ENCODE measurements at regions of chr2 and their contacts with region 1.

Region 1: DNA sequence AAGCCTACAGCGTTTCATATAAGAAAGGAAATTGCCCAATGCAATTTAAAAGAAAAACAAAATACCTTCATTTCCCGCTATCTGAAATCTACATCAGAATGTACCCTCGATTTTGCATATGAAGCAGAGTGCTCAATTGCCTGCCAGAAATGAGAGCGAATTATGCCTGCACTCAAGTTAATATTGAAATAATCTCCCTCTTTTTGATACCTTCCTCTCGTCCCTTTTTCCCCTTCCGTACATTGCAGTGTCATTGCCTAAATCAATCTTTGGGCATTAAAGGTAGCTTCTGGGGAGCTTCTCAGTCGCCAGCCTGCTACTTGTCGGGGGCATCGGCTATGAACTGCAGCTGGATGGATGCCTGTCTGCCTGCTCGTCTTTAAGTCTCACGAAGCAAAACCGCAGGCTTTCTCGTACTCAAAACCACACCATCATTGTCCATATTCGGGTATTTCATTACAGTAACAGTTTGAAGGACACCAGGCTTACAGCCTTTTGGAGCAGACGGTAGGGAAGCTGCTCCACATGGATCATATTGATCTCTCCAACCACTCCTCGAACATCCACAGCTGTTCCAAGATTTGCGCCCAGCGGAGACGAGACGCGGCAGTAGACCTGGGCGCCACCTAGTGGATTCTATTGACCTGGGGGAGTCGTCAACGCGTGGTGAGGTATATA is 64.0 kb upstream of the HNRNPA3 start:
- DNase-seq: peak; percentile 65
- H3K4me3 Mint-ChIP-seq: peak overlapping the region; percentile 82
- H3K27ac Mint-ChIP-seq: peak overlapping the region; percentile 10
- H3K4me1 Mint-ChIP-seq: peaks cover 13% of the 10 kb centered on the region
- H3K27me3 Mint-ChIP-seq: peaks cover 61% of the 10 kb centered on the region

Region 2: DNA sequence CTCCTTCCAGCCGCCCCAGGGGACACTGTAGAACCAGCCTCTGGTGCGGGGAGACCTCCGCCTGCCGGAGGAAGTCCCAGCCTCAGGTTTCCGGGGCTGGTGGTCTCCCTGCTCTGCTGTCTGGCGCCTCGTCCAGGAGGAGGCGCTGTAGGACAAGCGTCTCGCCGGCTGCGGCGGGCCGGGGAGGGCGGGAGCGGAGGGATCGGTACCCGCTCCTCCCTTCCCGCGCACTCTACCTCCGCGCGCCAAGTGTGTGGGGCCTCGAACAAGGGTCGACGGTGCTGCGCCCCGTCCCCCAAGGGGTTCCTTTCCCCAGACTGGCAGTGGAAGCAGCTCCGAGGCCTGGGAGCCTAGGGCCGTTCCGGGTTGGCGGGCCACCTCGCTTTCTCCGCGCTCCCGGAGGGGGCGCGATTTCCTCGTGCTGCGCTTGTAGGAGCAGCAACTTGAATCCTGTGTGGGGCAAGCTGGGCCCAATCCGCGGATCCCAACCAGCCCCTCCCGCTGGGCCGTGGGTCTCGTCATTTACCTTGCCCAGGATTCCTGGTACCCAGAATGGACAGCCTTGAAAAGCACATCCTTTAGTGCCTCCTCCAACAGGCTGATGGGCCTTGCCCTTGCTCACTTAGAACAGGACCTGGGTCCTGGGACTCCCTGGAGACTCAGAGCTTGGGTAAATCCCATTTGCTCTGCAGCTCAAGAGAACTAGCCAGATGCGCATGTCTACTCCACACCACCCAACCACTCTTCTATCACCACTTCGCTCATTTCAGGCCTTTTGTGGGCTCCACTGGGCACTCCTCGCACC is 1007.9 kb before region 1 on chr2:
- intact Hi-C with region 1: loop called (anchors 1 kb)
- DNase-seq: peak; percentile 49
- H3K4me3 Mint-ChIP-seq: peak overlapping the region; percentile 3
- H3K27ac Mint-ChIP-seq: no peak overlapping the region
- H3K4me1 Mint-ChIP-seq: peaks cover 11% of the 10 kb centered on the region
- H3K27me3 Mint-ChIP-seq: peaks cover 68% of the 10 kb centered on the region

Region 3: DNA sequence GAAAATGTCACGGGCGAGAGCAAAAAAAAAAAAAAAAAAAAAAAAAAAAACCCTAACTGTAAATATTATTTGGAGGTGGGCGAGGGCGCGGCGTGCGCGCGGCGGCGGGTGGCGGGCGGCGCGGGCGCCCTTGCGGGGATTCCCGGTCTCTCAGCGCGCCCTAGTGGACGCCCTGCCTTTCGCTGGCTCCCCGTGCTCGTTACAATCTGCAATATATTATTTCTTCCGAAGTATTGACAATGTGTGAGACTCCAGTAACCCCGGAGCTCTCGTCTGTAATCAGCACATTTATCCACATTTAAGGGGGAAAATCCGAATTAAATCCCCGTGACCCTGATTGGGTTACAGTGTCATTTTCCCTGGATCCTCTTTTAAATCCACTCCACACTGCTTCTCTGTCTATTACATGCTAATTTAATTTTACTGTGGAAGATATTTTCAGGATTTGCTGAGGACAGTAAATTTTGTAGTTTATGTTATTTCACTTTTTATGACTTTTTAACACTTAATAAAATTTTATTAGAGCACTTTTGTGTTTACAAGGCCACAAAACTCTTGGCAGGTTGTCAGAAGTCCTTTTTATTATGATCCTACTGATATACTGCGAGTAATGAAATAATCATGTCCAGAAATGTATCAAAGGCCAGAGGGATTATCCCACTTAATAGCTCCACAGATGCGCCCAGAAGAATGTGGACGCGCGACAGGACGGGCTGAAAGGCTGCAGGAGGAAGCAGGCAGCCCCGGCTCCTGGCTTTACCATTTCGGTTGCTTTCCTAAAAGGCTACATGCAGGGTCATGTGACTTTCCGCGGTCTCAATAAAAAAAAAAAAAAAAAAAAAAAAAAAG is 510.2 kb before region 1 on chr2:
- intact Hi-C with region 1: loop called (anchors 5 kb)
- DNase-seq: peak; percentile 28
- H3K4me3 Mint-ChIP-seq: peak overlapping the region; percentile 58
- H3K27ac Mint-ChIP-seq: no peak overlapping the region
- H3K4me1 Mint-ChIP-seq: peaks cover 6% of the 10 kb centered on the region
- H3K27me3 Mint-ChIP-seq: peaks cover 72% of the 10 kb centered on the region

Region 4: GRCh38 chr2:176745543-176746200 is 402.9 kb before region 1 on chr2:
- intact Hi-C with region 1: loop called (anchors 5 kb)
- DNase-seq: no peak
- H3K4me3 Mint-ChIP-seq: no peak overlapping the region
- H3K27ac Mint-ChIP-seq: no peak overlapping the region
- H3K4me1 Mint-ChIP-seq: no peaks in the 10 kb centered on the region
- H3K27me3 Mint-ChIP-seq: peaks cover 17% of the 10 kb centered on the region

Region 5: DNA sequence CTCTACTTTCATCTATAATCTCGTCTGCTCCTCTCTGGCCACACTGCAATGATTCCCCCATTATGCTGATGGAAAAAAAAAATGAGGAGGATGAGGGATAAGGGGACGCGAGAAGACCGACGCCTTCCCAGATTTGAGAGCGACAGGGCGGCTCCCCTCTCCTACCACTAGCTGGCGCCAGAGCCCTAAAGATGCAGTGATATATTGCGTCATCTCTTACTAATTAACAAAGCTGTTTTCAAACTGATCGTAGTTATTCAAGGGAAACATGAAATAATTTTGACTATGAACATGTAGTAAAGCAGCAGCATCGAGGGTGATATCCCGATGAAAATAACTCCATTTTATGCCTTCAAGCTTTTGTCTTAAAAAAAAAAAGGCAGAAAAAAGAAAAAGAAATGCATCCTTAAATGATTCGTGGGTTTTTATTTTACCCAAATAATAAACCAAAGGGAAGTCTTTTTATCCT is 16.0 kb after region 1 on chr2:
- intact Hi-C with region 1: loop called (anchors 1 kb)
- DNase-seq: peak; percentile 63
- H3K4me3 Mint-ChIP-seq: no peak overlapping the region
- H3K27ac Mint-ChIP-seq: no peak overlapping the region
- H3K4me1 Mint-ChIP-seq: peaks cover 25% of the 10 kb centered on the region
- H3K27me3 Mint-ChIP-seq: peaks cover 3% of the 10 kb centered on the region

Measured in activated T-helper 1 cell treated with anti-CD3 and anti-CD28 coated beads, Interleukin-12 subunit alpha, Interleukin-12 subunit beta, Interleukin-2, Interleukin-4 antibody, amounts not matched to agents 30 ng/mL and 10 ng/mL and 1 ng/mL, durations not matched to agents 14 hours and 24 hours and 36 hours (primary cell).